AG04450 (cell line): ENCODE measurements at regions of chr11 and their contacts with region 1.

Region 1: DNA sequence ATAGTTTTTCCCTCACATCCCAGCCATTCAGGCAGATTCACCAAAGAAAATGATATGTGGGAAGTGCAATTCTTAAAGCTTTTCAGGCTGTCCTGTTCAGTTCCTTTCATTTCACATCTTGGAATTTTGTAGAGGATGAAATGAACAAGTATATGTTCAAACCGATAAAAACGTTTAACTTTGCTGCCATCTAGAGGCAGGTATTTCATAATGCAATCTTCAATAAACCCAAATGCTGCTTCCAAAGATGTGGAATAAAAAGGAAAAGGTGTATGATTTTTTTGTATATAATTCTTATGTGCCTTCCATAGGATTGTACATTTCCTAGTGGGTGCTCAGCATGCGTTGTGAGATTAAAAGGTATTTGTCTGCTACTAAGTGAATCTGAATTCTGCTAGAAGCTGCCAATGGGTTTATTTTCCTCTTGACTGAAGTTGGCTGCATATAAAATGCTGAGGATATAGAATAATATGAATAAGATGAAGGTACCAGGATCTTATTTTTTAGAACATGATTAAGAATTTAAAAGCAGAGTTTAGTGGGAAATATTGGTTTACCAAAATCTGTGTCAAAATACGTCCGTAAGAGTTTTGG is 199.3 kb downstream of the PGR start:
- DNase-seq: no peak
- H3K4me3 ChIP-seq: no peak overlapping the region
- H3K27ac ChIP-seq: no peak overlapping the region
- H3K27me3 ChIP-seq: no peaks in the 10 kb centered on the region
- CTCF ChIP-seq: peak; percentile 59

Region 2: DNA sequence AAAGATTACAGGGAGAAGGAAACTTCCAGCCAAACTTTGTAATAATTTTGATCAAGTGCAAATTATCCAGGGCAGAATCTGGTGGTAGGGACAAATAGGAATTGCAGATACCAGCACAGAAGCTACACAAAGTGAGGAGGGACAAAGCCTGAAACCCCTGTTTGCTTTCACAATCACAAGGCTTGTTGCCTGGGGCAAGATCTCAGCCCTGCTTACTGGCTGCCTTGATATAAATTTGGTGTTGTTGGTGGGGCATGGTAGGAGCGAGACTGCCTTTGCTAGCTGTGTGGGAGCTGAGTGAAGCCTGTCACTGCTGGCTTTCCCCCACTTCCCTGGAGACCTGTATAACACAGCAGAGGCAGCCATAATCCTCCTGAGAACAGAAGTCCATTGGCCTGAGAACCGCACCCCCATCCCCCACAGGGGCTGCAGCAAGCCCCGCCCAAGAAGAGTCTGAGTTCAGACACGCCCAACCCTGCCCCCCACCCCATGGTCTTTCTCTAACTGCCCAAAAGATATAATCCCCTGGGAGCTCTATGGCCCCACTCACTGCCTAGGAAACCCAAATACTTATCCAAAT is 282.5 kb before region 1 on chr11:
- CTCF ChIA-PET with region 1: interaction called, 13 read pairs
- POLR2A ChIA-PET with region 1: no interaction called
- DNase-seq: no peak
- H3K4me3 ChIP-seq: no peak overlapping the region
- H3K27ac ChIP-seq: no peak overlapping the region
- H3K27me3 ChIP-seq: no peaks in the 10 kb centered on the region
- CTCF ChIP-seq: no peak

Region 3: GRCh38 chr11:100681064-100681502 is 249.2 kb before region 1 on chr11:
- CTCF ChIA-PET with region 1: interaction called, 11 read pairs
- POLR2A ChIA-PET with region 1: no interaction called
- DNase-seq: no peak
- H3K4me3 ChIP-seq: no peak overlapping the region
- H3K27ac ChIP-seq: no peak overlapping the region
- H3K27me3 ChIP-seq: no peaks in the 10 kb centered on the region
- CTCF ChIP-seq: no peak

Region 4: GRCh38 chr11:100866453-100866852 is 63.8 kb before region 1 on chr11:
- CTCF ChIA-PET with region 1: interaction called, 12 read pairs
- POLR2A ChIA-PET with region 1: no interaction called
- DNase-seq: no peak
- H3K4me3 ChIP-seq: no peak overlapping the region
- H3K27ac ChIP-seq: no peak overlapping the region
- H3K27me3 ChIP-seq: no peaks in the 10 kb centered on the region
- CTCF ChIP-seq: no peak

Region 5: DNA sequence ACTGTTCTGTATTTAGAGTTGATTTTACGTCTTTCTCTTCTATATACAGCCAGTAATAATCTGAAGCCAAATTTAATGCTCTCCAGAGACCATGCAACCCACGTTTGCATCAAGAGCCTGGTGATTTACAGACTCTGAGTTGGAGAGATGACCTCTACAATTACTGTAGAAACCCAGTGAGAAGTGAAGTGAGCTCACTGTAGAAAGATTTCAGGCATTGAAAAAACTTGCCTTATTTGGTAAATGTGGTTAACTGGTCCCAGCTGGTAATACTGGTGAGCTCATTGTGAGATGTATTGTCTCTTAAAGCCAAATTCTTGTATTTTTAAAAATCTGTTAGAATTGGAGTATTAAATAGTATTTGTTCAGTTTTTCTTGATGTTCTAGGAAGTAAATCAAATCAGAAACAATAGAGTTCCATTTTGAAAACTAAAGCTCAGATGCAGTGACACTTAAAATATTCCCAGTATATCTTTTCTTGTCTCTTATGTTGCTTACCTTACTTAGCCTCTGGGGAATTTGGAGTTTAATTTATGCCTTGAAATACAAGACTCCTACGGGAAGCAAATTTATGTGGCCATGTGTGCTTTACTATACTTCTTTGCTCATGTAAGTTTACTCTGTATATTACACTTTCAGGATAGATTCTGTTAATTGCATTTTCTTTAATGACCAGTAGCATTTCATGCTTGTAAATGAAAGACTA is 53.3 kb before region 1 on chr11:
- CTCF ChIA-PET with region 1: interaction called, 11 read pairs
- POLR2A ChIA-PET with region 1: no interaction called
- DNase-seq: peak; percentile 92
- H3K4me3 ChIP-seq: no peak overlapping the region
- H3K27ac ChIP-seq: peak overlapping the region; percentile 88
- H3K27me3 ChIP-seq: no peaks in the 10 kb centered on the region
- CTCF ChIP-seq: no peak

Region 6: GRCh38 chr11:100949443-100949842 is 19.2 kb after region 1 on chr11:
- CTCF ChIA-PET with region 1: no interaction called
- POLR2A ChIA-PET with region 1: no interaction called
- DNase-seq: no peak
- H3K4me3 ChIP-seq: no peak overlapping the region
- H3K27ac ChIP-seq: no peak overlapping the region
- H3K27me3 ChIP-seq: no peaks in the 10 kb centered on the region
- CTCF ChIP-seq: no peak